ENCODE measurements at regions of chr15 and their contacts with region 1.

Region 1: DNA sequence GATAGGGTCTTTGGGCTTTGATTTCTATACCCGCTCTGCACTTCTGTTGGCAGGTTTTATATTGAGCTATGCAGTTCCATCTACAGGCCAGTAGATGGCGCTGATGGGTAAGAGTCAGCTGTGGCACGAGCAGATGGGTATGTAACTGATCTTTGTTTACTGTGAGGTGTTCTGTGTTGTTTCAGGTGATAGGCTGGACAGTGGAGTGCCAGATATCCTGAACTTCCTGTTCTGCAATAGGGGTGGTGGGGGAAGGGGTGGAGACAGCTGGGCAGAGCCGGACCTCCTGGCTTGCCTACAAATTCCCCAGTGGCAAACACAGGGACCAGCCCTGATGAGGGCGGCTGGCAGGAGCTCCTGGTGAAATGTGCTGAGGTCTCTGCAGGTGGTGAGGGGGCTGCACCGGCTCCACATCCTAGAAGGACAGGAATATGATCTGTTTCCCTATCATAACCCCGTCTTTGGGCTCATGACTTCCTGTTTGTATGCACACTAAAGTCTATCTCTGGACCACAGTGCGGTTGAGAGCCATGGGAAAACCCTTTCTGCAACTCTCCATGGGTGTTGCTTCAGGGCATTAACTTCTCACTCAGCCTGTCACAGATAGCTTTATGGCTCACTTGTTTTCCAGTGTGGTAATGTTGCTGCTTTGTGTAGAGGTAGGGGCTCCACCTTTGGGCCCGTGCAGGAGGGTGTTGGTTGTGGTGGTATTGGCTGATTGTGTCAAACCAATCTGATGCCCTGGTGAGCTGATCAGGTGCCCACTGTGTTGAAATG is 13.4 kb upstream of the FAM98B start:
- DNase-seq: peak; percentile 64
- H3K4me3 Mint-ChIP-seq: no peak overlapping the region
- H3K27ac Mint-ChIP-seq: no peak overlapping the region
- H3K4me1 Mint-ChIP-seq: peaks cover 11% of the 10 kb centered on the region
- H3K27me3 Mint-ChIP-seq: peaks cover 49% of the 10 kb centered on the region

Region 2: DNA sequence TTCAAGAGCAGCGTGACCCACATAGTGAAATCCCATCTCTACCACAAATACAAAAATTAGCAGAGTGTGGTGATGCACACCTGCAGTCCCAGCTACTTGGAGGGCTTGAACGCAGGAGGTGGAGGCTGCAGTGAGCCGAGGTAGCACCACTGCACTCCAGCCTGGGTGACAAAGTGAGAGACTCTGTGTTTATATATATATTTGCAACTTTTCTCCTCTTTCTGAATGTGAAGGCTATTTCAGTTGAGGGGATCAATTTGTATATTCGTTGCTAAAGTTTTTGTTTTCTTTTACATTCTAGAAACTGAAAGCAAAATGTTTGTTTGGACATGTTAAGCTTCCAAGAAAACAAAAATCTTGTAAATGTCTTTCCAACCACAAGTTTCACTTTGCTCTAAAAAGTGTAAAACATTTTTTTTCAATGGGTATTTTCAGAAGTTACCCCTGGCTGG is 16.4 kb before region 1 on chr15:
- CTCF ChIA-PET with region 1: interaction called, 16 read pairs
- DNase-seq: no peak
- H3K4me3 Mint-ChIP-seq: no peak overlapping the region
- H3K27ac Mint-ChIP-seq: no peak overlapping the region
- H3K4me1 Mint-ChIP-seq: peaks cover 13% of the 10 kb centered on the region
- H3K27me3 Mint-ChIP-seq: peaks cover 42% of the 10 kb centered on the region

Region 3: GRCh38 chr15:38453971-38454695 is 13.6 kb after region 1 on chr15 and contains the start of gene FAM98B:
- CTCF ChIA-PET with region 1: interaction called, 44 read pairs
- DNase-seq: peak; percentile 88
- H3K4me3 Mint-ChIP-seq: peak within 1 kb of the TSS; percentile 93
- H3K27ac Mint-ChIP-seq: peak within 1 kb of the TSS; percentile 94
- H3K4me1 Mint-ChIP-seq: peaks cover 32% of the 10 kb centered on the region
- H3K27me3 Mint-ChIP-seq: peaks cover 18% of the 10 kb centered on the region

Region 4: GRCh38 chr15:38474155-38474757 is 33.7 kb after region 1 on chr15:
- CTCF ChIA-PET with region 1: interaction called, 31 read pairs
- DNase-seq: peak; percentile 45
- H3K4me3 Mint-ChIP-seq: no peak overlapping the region
- H3K27ac Mint-ChIP-seq: peak overlapping the region; percentile 22
- H3K4me1 Mint-ChIP-seq: peaks cover 4% of the 10 kb centered on the region
- H3K27me3 Mint-ChIP-seq: no peaks in the 10 kb centered on the region

Region 5: GRCh38 chr15:38528294-38528693 is 87.8 kb after region 1 on chr15:
- CTCF ChIA-PET with region 1: no interaction called
- DNase-seq: no peak
- H3K4me3 Mint-ChIP-seq: no peak overlapping the region
- H3K27ac Mint-ChIP-seq: peak overlapping the region; percentile 29
- H3K4me1 Mint-ChIP-seq: peaks cover 54% of the 10 kb centered on the region
- H3K27me3 Mint-ChIP-seq: no peaks in the 10 kb centered on the region

Region 6: DNA sequence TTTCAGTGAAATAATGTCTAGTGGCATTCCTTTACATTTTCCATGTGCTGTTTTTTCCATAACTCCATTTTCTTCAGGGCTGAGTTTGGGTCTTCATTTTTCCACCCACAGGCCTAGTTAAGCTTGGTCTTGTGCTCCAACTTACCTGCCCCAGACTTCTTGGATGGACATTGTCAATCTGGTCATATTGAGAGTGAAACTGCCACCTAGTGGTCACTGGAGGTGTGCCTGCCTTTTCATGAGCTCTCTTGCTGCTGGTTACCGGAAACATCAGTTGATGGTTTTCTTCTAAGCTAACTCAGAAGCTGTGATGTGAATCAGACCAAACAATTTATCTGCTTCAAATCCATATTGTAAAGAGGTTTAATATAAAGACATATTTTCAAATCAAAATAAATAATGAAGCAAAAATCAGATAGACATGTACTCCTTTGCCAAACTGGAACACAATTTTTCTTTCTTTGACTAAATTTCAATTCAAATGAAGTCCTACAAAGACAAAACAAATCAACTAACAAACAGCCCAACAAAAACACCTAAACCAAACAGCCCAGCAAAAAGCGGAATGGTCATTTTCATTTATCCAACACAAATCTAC is 259.2 kb after region 1 on chr15:
- CTCF ChIA-PET with region 1: interaction called, 169 read pairs
- DNase-seq: peak; percentile 86
- H3K4me3 Mint-ChIP-seq: no peak overlapping the region
- H3K27ac Mint-ChIP-seq: peak overlapping the region; percentile 64
- H3K4me1 Mint-ChIP-seq: peaks cover 66% of the 10 kb centered on the region
- H3K27me3 Mint-ChIP-seq: peaks cover 9% of the 10 kb centered on the region